MCF 10A (cell line): ENCODE measurements at regions of chr12 and their contacts with region 1.

Region 1: DNA sequence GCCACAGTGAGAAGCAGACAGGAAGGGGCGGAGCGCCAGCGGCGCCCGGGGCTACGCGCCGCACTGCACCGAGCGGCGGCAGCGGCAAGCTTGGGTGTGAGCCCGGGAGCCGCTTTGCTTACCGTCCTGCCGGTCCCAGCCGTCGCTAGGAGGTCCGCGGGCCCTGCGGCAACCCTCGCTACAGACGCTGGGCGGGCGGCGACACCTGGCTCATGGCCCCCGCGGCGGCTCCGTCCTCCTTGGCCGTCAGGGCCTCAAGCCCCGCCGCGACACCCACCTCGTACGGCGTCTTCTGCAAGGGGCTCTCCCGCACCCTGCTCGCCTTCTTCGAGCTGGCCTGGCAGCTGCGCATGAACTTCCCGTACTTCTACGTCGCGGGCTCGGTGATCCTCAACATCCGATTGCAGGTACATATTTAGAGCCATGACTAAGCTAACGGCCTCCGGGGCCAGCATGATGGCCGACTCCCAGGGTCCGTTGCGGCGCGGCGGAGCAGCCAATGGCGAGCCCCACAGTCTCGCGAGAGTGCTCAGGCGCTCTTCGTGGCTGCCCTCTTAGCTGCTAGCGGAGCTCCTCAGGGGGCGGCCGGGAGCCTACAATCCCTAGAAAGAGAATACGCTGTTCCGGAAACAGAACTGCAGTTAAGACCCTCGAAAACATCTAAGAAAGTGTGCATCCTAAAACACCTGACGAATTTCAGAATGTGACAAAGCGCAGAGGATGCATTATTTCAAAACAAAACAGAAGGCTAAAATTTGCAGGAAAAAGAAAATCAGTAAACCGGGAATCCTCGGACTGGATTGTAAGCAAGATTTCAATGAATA is at the start of gene SMIM10L1:
- DNase-seq: peak; percentile 95
- H3K4me3 Mint-ChIP-seq: peak within 1 kb of the TSS; percentile 99
- H3K27ac Mint-ChIP-seq: peak within 1 kb of the TSS; percentile 98
- H3K4me1 Mint-ChIP-seq: peaks cover 48% of the 10 kb centered on the region
- H3K27me3 Mint-ChIP-seq: no peaks in the 10 kb centered on the region
- CTCF ChIP-seq: no peak
- total RNA-seq, gene SMIM10L1: 10.5 and 10.9 TPM in 2 replicates

Region 2: GRCh38 chr12:10716704-10717315 is 454.5 kb before region 1 on chr12:
- CTCF ChIA-PET with region 1: no interaction called
- POLR2A ChIA-PET with region 1: interaction called, 16 read pairs
- intact Hi-C with region 1: no loop called
- DNase-seq: peak; percentile 97
- H3K4me3 Mint-ChIP-seq: peak overlapping the region; percentile 99
- H3K27ac Mint-ChIP-seq: peak overlapping the region; percentile 98
- H3K4me1 Mint-ChIP-seq: peaks cover 46% of the 10 kb centered on the region
- H3K27me3 Mint-ChIP-seq: no peaks in the 10 kb centered on the region
- CTCF ChIP-seq: no peak

Region 3: DNA sequence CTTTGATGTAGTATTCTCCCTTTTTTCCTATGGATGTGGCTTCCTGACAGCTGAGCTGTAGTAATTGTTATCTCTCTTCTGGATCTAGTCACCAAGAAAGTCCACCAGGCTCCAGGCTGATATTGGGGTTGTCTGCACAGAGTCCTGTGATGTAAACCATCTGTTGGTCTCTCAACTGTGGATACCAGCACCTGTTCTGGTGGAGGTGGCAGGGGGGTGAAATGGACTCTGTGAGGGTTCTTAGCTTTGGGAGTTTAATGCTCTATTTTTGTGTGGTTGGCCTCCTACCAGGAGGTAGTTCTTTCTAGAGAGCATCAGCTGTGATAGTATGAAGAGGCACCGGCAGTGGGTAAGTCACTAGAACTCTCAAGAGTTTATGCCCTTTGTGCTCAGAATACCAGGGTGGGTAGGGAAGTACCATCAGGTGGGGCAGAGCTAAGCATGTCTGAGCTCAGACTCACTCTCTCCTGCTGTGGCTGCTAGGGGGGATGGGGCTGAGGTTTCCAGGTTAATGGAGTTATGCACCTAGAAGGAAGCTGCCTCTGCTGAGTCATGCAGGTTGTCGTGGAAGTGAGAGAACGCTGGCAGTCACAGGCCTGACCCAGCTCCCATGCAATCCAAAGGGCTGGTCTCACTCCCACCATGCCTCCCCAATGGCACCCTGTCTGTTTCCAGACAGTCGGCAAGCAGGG is 229.3 kb before region 1 on chr12:
- CTCF ChIA-PET with region 1: no interaction called
- POLR2A ChIA-PET with region 1: interaction called, 3 read pairs
- intact Hi-C with region 1: loop called (anchors 5 kb)
- DNase-seq: peak; percentile 72
- H3K4me3 Mint-ChIP-seq: no peak overlapping the region
- H3K27ac Mint-ChIP-seq: peak overlapping the region; percentile 78
- H3K4me1 Mint-ChIP-seq: peaks cover 31% of the 10 kb centered on the region
- H3K27me3 Mint-ChIP-seq: no peaks in the 10 kb centered on the region
- CTCF ChIP-seq: no peak

Region 4: DNA sequence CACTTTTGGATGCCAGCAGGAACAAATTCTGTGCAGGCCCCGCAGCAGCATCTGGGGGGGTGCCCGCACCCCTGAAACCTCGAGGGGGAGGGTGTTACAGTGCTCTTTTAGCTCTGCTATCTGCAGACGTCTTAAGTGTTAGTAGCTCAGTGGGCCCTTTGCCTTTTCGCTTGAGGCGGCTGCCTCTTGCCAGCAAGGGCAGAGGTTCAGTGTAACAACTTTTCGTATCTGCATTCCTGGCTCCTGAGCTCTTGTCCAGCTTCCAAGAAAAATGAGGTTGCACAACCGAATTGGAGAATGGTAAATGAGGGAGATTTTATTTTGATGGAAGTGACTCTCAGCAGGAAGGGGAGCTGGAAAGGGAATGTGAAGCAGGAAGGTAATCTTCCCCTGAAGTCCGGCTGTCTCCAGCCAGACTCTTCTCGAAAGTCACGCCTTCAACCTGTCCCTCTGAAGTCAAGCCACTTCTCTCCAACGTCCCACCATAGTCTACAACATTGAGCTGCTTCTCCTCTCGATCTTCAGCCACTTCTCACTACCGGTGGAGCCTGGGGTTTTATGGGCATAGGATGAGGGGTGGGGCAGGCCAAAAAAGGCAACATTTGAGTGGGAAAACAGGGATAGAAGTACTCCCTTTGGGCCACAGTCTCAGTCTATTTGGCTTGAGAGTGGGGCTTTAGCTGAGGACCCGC is 202.4 kb before region 1 on chr12:
- CTCF ChIA-PET with region 1: no interaction called
- POLR2A ChIA-PET with region 1: interaction called, 16 read pairs
- intact Hi-C with region 1: no loop called
- DNase-seq: peak; percentile 94
- H3K4me3 Mint-ChIP-seq: peak overlapping the region; percentile 62
- H3K27ac Mint-ChIP-seq: peak overlapping the region; percentile 63
- H3K4me1 Mint-ChIP-seq: peaks cover 18% of the 10 kb centered on the region
- H3K27me3 Mint-ChIP-seq: no peaks in the 10 kb centered on the region
- CTCF ChIP-seq: no peak

Region 5: GRCh38 chr12:11183011-11183410 is 11.7 kb after region 1 on chr12:
- CTCF ChIA-PET with region 1: interaction called, 3 read pairs
- POLR2A ChIA-PET with region 1: interaction called, 35 read pairs
- intact Hi-C with region 1: no loop called
- DNase-seq: no peak
- H3K4me3 Mint-ChIP-seq: no peak overlapping the region
- H3K27ac Mint-ChIP-seq: no peak overlapping the region
- H3K4me1 Mint-ChIP-seq: peaks cover 13% of the 10 kb centered on the region
- H3K27me3 Mint-ChIP-seq: peaks cover 4% of the 10 kb centered on the region
- CTCF ChIP-seq: no peak